ENCODE measurements at regions of chr2 and their contacts with region 1.

Region 1: GRCh38 chr2:216404010-216404618 is 8.2 kb upstream of the SMARCAL1 start:
- DNase-seq: no peak
- H3K4me3 ChIP-seq: no peak overlapping the region
- CTCF ChIP-seq: peak; percentile 78

Region 2: GRCh38 chr2:216151313-216152030 is 252.6 kb before region 1 on chr2:
- CTCF ChIA-PET with region 1: interaction called, 12 read pairs
- POLR2A ChIA-PET with region 1: no interaction called
- DNase-seq: no peak
- H3K4me3 ChIP-seq: no peak overlapping the region
- CTCF ChIP-seq: no peak

Region 3: DNA sequence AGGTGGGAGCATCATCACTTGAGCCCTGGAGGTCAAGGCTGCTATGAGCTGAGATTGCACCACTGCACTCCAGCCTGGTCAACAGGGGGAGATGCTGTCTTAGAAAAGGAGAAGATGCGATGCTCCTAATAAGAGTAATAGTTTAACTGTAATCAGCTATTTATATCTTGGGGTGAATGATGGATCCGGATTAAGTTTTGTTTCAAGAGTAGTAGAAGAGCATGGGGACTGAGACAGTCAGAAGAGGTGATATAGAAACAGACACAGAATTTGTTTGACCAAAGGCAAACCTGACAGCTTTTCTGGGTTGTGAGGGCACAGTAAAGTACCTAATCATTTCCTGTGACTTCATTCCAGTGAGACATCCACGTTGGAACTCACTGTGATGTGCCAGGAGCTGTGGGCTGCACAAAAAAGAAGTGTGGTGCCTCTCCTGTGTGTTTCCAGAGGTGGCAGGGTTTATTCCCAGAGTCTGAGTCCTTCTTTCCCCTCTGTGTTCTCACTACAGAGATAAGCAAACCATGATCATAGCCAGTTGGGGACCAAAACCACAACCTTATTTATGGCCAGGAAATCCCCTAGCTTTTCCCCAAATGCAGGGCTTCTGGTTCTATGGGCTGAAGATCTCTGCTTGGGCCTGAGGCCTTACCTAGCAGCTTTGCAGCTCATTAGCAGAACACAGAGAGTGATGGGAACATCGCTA is 181.3 kb before region 1 on chr2:
- CTCF ChIA-PET with region 1: interaction called, 63 read pairs
- POLR2A ChIA-PET with region 1: no interaction called
- DNase-seq: no peak
- H3K4me3 ChIP-seq: no peak overlapping the region
- CTCF ChIP-seq: peak; percentile 49

Region 4: GRCh38 chr2:216371756-216372702 is 32.1 kb before region 1 on chr2 and contains the start of gene MARCHF4:
- CTCF ChIA-PET with region 1: interaction called, 25 read pairs
- POLR2A ChIA-PET with region 1: no interaction called
- DNase-seq: peak; percentile 63
- H3K4me3 ChIP-seq: peak within 1 kb of the TSS; percentile 75
- CTCF ChIP-seq: no peak

Region 5: GRCh38 chr2:216388046-216388884 is 15.8 kb before region 1 on chr2:
- CTCF ChIA-PET with region 1: interaction called, 71 read pairs
- POLR2A ChIA-PET with region 1: interaction called, 3 read pairs
- DNase-seq: no peak
- H3K4me3 ChIP-seq: no peak overlapping the region
- CTCF ChIP-seq: no peak

Region 6: DNA sequence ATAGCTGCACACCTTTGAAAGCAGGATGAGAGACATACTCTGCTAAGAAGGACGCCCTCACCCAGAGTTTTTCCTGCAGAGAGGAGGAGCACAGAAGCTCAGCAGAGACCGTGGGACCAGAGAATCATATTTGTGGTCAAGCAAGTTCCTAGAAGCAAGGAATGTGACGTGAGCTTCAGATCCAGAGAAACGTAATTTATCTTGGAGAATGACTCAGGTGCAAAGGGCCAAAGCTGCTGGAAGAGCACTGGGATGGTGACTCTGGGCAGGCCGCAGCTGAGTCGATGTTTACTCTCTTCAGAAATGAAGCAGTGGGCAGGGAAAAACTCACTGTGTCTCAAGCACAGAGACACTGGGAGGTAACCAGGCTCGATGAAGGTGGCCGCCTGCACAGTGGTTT is 179.0 kb after region 1 on chr2:
- CTCF ChIA-PET with region 1: no interaction called
- POLR2A ChIA-PET with region 1: no interaction called
- DNase-seq: peak; percentile 86
- H3K4me3 ChIP-seq: no peak overlapping the region
- CTCF ChIP-seq: no peak